Ascending aorta (tissue), 2 donors: ENCODE measurements at regions of chr2 and their contacts with region 1.

Region 1: DNA sequence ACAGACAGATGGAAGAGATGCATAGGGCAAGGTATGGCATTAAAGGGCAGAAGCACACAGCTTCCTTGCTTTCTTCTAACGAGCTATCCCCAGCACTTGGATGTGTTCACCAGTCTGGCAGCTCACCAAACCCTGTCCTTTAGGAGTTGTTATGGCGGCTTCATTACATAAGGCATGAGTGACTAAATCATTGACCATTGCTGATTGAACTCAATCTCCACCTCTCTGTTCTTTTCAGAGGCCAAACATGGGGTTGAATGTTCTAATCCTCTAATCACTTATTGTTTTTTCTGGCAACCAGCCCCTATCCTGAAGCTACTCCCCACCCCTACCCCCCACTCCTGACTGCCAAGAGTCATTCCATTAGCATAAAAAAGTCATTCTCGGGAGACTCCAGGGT is 301.8 kb downstream of the XIRP2 start:
- DNase-seq: no peak
- H3K4me3 ChIP-seq: no peak overlapping the region
- H3K27ac ChIP-seq: no peak overlapping the region
- H3K4me1 ChIP-seq: peaks cover 0 to 23% of the 10 kb centered on the region in 2 donors
- H3K27me3 ChIP-seq: no peaks in the 10 kb centered on the region
- CTCF ChIP-seq: no peak

Region 2: GRCh38 chr2:167017021-167017420 is 173.0 kb before region 1 on chr2:
- intact Hi-C with region 1: no loop called
- DNase-seq: no peak
- H3K4me3 ChIP-seq: no peak overlapping the region
- H3K27ac ChIP-seq: no peak overlapping the region
- H3K4me1 ChIP-seq: no peaks in the 10 kb centered on the region
- H3K27me3 ChIP-seq: no peaks in the 10 kb centered on the region
- CTCF ChIP-seq: no peak

Region 3: DNA sequence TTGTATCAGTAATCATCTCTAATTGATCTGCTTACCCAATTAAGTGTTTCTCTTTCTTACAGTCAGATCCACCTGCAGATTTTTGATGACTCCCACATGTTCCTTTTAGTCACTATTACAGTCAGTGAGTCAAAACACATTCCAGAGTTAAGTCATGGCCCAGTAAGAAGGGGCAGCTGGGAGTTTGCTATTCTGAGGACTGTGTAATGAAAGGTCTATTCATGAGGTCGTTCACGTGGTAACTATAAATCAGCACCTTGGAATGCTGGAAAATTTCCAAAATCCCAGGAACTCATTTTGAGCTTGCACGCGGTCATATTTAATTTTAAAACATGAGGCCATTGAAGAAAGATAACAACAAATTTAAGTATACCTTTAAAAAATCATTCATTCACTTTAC is 49.3 kb before region 1 on chr2:
- intact Hi-C with region 1: loop called (anchors 5 kb)
- DNase-seq: peak in 1 of 2 donors; percentile 70
- H3K4me3 ChIP-seq: no peak overlapping the region
- H3K27ac ChIP-seq: no peak overlapping the region
- H3K4me1 ChIP-seq: no peaks in the 10 kb centered on the region
- H3K27me3 ChIP-seq: no peaks in the 10 kb centered on the region
- CTCF ChIP-seq: no peak

Region 4: GRCh38 chr2:167292430-167293171 is 102.5 kb after region 1 on chr2:
- intact Hi-C with region 1: loop called (anchors 5 kb)
- DNase-seq: peak; percentile 25 to 89
- H3K4me3 ChIP-seq: peak within 1 kb of the TSS; percentile 66 to 97
- H3K27ac ChIP-seq: peak within 1 kb of the TSS; percentile 77 to 87
- H3K4me1 ChIP-seq: peaks cover 3 to 7% of the 10 kb centered on the region in 2 donors
- H3K27me3 ChIP-seq: no peaks in the 10 kb centered on the region
- CTCF ChIP-seq: peak in 2 of 3 experiments; percentile 12 to 38

Region 5: DNA sequence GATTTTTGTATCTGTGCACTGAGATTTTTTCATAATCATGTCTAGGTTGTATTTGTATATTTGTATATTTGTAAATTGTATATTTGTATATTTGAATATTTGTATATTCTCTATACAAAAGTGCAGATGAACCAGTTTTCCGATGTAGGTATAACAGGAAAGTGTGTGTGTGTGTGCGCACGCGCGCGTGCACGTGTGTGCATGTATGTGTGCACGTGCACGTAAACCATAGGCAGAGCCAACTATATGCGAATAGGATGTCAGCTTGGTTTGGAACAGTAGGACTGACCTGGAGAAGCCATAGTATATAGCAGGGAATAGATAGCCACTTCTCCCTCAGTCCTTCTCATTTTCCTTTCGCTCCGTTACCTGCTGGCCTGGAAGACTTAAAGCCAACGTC is 264.0 kb after region 1 on chr2:
- intact Hi-C with region 1: no loop called
- DNase-seq: no peak
- H3K4me3 ChIP-seq: no peak overlapping the region
- H3K27ac ChIP-seq: no peak overlapping the region
- H3K4me1 ChIP-seq: no peaks in the 10 kb centered on the region
- H3K27me3 ChIP-seq: no peaks in the 10 kb centered on the region
- CTCF ChIP-seq: no peak